Heart right ventricle (tissue), 16 donors: ENCODE measurements at regions of chr11 and their contacts with region 1.

Region 1: DNA sequence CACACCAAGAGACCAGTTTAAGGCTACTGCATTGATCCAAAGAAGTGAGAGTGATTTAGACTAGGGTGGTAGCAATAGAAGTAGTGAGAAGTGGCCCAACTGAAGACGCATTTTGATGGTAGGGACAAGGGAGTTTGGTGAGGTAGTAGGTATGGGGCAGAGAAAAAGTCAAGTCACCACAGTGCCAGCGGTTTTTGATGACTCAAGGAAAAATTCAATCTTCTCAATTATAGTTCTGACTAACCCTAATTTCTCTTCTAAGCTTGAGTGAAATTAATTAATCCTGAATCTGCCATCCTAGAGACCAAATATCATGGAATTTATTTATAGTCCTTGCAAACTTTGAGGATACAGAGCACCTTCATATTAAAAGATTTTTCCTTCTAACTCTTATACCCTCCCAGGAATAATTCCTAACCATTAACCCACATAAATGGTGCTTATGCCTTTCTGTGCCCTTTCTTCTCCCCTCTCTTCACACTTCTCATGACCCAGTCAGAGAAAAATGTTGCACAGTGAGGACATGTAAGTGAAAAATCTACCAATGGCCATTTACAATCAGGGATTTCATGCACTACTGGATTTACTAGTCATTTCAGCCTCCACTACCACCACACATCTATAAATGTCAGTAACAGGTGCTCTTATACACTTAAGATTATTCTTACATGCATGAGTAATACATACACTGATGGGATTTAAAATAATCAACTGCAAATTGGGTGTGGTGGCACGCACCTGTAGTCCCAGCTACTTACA is 45.9 kb upstream of the ARHGAP32 start:
- DNase-seq: no peak
- ATAC-seq: no peak
- H3K4me3 ChIP-seq: no peak overlapping the region
- H3K27ac ChIP-seq: no peak overlapping the region
- H3K4me1 ChIP-seq: peaks cover 0 to 4% (median 0%) of the 10 kb centered on the region in 9 donors
- H3K27me3 ChIP-seq: no peaks in the 10 kb centered on the region
- CTCF ChIP-seq: no peak

Region 2: DNA sequence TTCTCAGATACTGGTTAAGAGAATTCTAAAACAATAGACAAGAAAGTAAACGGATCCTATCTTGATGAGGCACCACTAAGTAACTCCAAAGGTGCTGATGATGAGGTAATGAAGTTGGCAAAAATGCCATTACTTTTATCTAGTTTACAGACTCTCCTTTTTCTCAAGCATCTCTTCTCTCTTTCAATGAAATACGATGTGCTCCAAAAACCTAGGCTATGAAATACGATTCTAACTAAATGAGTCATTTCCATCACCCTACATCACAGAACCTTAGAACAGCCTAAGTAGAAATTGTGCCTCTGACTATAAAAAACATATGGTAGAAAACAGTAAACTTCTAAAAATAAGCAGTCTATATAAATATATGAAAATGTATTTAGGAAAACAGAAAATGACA is 13.0 kb after region 1 on chr11:
- intact Hi-C with region 1: loop called in 1 of 10 experiments (anchors 1 kb)
- DNase-seq: no peak
- ATAC-seq: no peak
- H3K4me3 ChIP-seq: no peak overlapping the region
- H3K27ac ChIP-seq: no peak overlapping the region
- H3K4me1 ChIP-seq: peaks cover 0 to 17% (median 0%) of the 10 kb centered on the region in 9 donors
- H3K27me3 ChIP-seq: no peaks in the 10 kb centered on the region
- CTCF ChIP-seq: no peak

Region 3: DNA sequence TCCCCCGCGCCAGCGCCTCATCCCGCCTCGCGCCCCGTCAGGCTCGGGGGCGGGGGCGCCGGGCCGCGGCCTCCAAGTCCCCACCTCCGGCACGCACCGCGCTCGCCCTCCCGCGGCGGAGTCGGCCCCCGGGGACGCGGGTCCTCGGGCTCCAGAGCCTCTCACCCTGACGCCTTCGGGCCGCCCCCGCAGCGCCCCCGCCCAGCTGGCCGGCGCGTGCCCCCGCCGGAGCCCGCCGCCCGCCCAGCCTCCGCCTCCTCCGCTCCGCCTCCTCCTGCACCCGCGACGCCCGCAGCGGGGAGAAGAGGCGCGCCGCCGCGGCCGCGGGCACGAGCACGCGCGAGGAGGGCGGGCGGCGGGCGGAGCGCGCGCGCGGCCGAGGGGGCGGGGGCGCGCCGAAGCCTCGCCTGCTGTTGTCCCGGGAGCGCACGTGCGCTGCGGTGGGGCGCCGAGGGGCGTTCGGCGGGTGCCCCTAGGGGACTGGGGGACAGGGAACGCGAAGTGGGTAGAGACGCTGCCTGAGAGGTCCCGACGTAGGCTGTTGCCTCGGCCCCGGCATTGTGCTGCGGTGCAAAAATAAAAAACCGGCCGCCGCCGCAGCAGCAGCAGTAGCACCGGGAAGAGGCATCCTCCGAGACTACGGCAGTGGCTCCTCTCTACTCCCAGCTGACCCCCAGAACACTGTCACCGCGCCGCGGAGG is 41.4 kb after region 1 on chr11:
- intact Hi-C with region 1: no loop called
- DNase-seq: peak; percentile 69 to 86
- ATAC-seq: peak; percentile 89 to 97 (median 92)
- H3K4me3 ChIP-seq: peak overlapping the region in 9 of 10 donors; percentile 39 to 71 (median 60)
- H3K27ac ChIP-seq: peak overlapping the region in 7 of 10 donors; percentile 1 to 61 (median 39)
- H3K4me1 ChIP-seq: peaks cover 0 to 40% (median 18%) of the 10 kb centered on the region in 9 donors
- H3K27me3 ChIP-seq: no peaks in the 10 kb centered on the region
- CTCF ChIP-seq: peak in 1 of 9 donors; percentile 15